ENCODE measurements at regions of chr12 and their contacts with region 1.

Region 1: GRCh38 chr12:65169320-65170208 is at the start of gene LEMD3:
- DNase-seq: peak; percentile 96
- H3K4me3 Mint-ChIP-seq: peak within 1 kb of the TSS; percentile 85
- H3K27ac Mint-ChIP-seq: peak within 1 kb of the TSS; percentile 91
- H3K4me1 Mint-ChIP-seq: peaks cover 19% of the 10 kb centered on the region
- H3K27me3 Mint-ChIP-seq: no peaks in the 10 kb centered on the region
- total RNA-seq, gene LEMD3: 16.5 to 17.5 TPM

Region 2: DNA sequence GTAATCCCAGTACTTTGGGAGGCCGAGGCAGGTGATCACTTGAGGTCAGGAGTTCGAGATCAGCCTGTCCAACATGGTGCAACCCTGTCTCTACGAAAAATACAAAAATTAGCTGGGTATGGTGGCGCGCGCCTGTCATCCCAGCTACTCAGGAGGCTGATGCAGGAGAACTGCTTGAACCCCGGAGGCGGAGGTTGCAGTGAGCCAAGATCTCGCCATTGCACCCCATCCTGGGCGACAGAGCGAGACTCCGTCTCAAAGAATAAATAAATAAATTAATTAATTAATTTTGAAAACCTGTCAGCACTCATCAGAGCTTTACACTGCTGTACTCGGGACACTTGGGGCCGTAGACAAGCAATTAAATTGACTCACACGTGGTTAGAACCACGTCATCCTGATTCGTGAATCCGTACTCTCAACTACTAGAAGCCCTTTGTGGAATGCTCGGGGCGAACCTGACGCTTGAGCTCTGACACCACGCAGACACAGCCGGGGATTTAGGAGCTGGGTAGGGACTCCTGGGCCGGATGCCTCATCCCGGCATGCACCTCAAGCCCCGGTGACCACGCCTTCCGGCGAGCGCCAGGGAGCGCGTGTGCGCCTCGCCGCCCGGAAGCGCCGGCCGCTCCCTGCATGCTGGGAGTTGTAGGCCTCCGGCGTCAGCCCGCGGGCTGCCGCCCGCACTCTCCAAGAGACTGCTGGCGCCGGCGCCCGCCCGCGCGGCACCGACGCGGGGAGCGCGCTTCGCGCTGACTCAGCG is 765.7 kb before region 1 on chr12 and contains the start of gene XPOT:
- CTCF ChIA-PET with region 1: no interaction called
- intact Hi-C with region 1: loop called (anchors 1 kb)
- DNase-seq: peak; percentile 94
- H3K4me3 Mint-ChIP-seq: peak within 1 kb of the TSS; percentile 95
- H3K27ac Mint-ChIP-seq: peak within 1 kb of the TSS; percentile 97
- H3K4me1 Mint-ChIP-seq: peaks cover 28% of the 10 kb centered on the region
- H3K27me3 Mint-ChIP-seq: no peaks in the 10 kb centered on the region
- total RNA-seq, gene XPOT: 227 to 236 TPM

Region 3: GRCh38 chr12:64759035-64759901 is 410.3 kb before region 1 on chr12 and contains the start of gene GNS:
- CTCF ChIA-PET with region 1: no interaction called
- intact Hi-C with region 1: loop called (anchors 1 kb)
- DNase-seq: peak; percentile 98
- H3K4me3 Mint-ChIP-seq: peak within 1 kb of the TSS; percentile 83
- H3K27ac Mint-ChIP-seq: peak within 1 kb of the TSS; percentile 85
- H3K4me1 Mint-ChIP-seq: peaks cover 41% of the 10 kb centered on the region
- H3K27me3 Mint-ChIP-seq: no peaks in the 10 kb centered on the region
- total RNA-seq, gene GNS: 14.3 to 14.6 TPM

Region 4: GRCh38 chr12:65182012-65182739 is 12.6 kb after region 1 on chr12:
- CTCF ChIA-PET with region 1: interaction called, 3 read pairs
- intact Hi-C with region 1: loop called (anchors 1 kb)
- DNase-seq: no peak
- H3K4me3 Mint-ChIP-seq: no peak overlapping the region
- H3K27ac Mint-ChIP-seq: no peak overlapping the region
- H3K4me1 Mint-ChIP-seq: peaks cover 42% of the 10 kb centered on the region
- H3K27me3 Mint-ChIP-seq: no peaks in the 10 kb centered on the region

Region 5: DNA sequence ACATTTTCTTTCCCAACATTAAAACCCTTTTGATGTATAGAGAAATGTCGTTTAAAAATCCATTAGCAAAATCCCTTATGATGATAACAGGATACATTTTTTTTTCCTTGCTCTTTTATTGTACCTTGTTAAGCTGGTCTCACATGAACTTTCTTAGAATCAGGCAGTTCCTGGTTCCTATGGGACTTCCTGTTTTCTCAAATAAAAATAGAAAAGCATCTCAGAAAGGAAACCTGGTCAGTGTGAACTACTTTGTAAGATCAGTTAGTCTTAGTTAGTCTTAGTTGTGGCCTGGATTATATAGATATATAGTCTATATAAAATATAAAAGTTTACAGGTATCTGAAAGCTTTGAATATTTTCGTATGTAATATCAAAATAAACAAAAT is 40.1 kb after region 1 on chr12:
- CTCF ChIA-PET with region 1: no interaction called
- intact Hi-C with region 1: loop called (anchors 2 kb)
- DNase-seq: no peak
- H3K4me3 Mint-ChIP-seq: peak overlapping the region; percentile 43
- H3K27ac Mint-ChIP-seq: peak overlapping the region; percentile 69
- H3K4me1 Mint-ChIP-seq: peaks cover 63% of the 10 kb centered on the region
- H3K27me3 Mint-ChIP-seq: no peaks in the 10 kb centered on the region

Region 6: DNA sequence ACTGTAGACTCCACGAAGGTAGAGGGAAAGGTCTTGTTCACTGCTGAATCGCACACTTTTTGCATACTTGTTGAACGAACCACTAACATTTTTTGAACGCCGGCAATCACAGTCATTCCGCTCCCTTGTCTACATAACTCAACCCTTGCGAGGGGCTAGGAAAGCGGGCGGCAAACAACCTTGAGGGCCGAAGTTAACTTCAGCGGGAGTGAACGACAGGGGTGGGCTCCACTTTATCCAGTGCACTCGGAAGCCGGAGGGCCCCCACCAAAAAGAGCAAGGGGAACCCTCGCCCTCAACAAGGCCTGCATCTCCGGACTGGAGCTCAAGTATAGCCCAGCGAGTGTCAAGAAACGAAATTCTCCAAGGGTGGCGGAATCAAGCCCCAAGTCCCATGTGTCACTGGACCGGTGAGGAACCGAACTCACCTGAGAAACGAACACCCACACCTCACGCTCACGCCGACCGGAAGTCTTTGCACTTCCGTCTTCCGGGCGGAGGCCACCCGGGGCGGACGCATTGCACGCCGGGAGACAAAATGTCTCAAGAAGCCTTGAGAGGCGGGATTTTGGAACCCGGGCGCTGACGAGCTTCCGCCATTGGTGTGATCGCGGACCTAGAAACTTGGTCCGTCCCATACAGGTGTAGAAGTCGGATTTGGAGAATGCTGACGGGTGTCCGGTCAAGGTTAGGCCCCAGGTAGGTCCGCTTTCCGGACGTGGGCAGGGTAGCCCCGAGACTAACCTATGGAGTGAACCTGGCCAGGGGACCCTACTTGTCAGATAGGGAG is 960.9 kb after region 1 on chr12 and contains the start of gene LLPH:
- CTCF ChIA-PET with region 1: no interaction called
- intact Hi-C with region 1: loop called (anchors 2 kb)
- DNase-seq: peak; percentile 94
- H3K4me3 Mint-ChIP-seq: peak within 1 kb of the TSS; percentile 96
- H3K27ac Mint-ChIP-seq: peak within 1 kb of the TSS; percentile 95
- H3K4me1 Mint-ChIP-seq: peaks cover 53% of the 10 kb centered on the region
- H3K27me3 Mint-ChIP-seq: no peaks in the 10 kb centered on the region
- total RNA-seq, gene LLPH: 25.6 to 26.0 TPM

Measured in activated naive CD4-positive, alpha-beta T cell treated with anti-CD3 and anti-CD28 coated beads for 36 hours (primary cell).